PC-3 (cell line): ENCODE measurements at regions of chr20 and their contacts with region 1.

Region 1: DNA sequence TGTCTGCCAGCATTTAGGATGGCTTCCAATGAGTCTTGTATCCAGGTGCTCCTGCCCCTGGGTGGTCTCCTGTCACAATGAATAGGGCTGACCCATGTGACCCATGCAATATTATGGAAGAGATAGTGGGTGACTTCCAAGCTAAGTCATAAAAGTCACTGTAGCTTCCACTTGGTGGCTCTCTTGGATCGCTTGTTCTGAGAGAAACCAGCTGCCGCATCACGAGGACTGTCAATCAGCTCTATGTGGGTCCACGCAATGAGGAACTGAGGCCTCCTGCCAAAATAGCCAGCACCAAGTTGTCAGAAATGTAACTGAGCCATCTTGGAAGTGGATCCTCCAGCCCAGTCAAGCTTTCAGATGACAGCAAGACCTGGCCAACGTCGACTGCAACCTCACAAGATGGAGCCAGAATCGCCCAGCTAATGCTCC is 14.9 kb upstream of the MATN4 start:
- DNase-seq: peak; percentile 70
- ATAC-seq: peak; percentile 54
- H3K4me3 ChIP-seq: no peak overlapping the region
- H3K27ac ChIP-seq: no peak overlapping the region
- H3K4me1 ChIP-seq: peaks cover 9% of the 10 kb centered on the region
- H3K27me3 ChIP-seq: no peaks in the 10 kb centered on the region
- CTCF ChIP-seq: peak; percentile 63

Region 2: GRCh38 chr20:45456632-45457031 is 133.7 kb after region 1 on chr20:
- CTCF ChIA-PET with region 1: interaction called, 4 read pairs
- POLR2A ChIA-PET with region 1: no interaction called
- intact Hi-C with region 1: loop called (anchors 5 kb)
- DNase-seq: peak; percentile 63
- ATAC-seq: peak; percentile 54; the same call in 1 of the 2 replicates
- H3K4me3 ChIP-seq: no peak overlapping the region
- H3K27ac ChIP-seq: no peak overlapping the region
- H3K4me1 ChIP-seq: no peaks in the 10 kb centered on the region
- H3K27me3 ChIP-seq: no peaks in the 10 kb centered on the region
- CTCF ChIP-seq: peak; percentile 74

Region 3: DNA sequence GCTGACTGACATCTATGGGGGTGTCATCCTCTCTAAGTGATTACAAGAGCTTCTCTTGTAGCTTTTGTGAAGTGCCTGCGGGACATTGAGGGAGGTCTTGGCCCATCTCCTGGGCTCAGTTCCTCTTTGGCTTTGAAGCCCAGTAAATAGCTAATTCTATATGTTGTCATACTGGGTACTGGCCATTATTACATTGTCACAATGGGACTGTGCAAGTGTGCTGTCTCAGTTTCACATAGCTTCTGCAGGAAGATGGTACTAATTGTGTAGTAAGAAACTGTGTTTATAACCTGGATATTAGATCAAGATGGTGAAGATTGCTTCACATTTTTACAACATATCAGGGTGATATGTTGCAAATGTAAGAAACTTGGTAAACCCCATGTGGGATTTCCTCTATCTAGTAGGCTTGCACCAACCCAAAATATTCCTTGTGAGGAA is 172.6 kb after region 1 on chr20:
- CTCF ChIA-PET with region 1: interaction called, 13 read pairs
- POLR2A ChIA-PET with region 1: no interaction called
- intact Hi-C with region 1: no loop called
- DNase-seq: no peak
- ATAC-seq: no peak
- H3K4me3 ChIP-seq: no peak overlapping the region
- H3K27ac ChIP-seq: no peak overlapping the region
- H3K4me1 ChIP-seq: no peaks in the 10 kb centered on the region
- H3K27me3 ChIP-seq: peaks cover 4% of the 10 kb centered on the region; the same call in 1 of the 2 replicates
- CTCF ChIP-seq: no peak

Region 4: GRCh38 chr20:45538209-45538799 is 215.3 kb after region 1 on chr20:
- CTCF ChIA-PET with region 1: no interaction called
- POLR2A ChIA-PET with region 1: no interaction called
- intact Hi-C with region 1: no loop called
- DNase-seq: peak; percentile 93
- ATAC-seq: peak; percentile 63
- H3K4me3 ChIP-seq: no peak overlapping the region
- H3K27ac ChIP-seq: no peak overlapping the region
- H3K4me1 ChIP-seq: peaks cover 10% of the 10 kb centered on the region; the same call in 1 of the 2 replicates
- H3K27me3 ChIP-seq: peaks cover 49% of the 10 kb centered on the region
- CTCF ChIP-seq: peak; percentile 43; the same call in 1 of the 2 replicates

Region 5: DNA sequence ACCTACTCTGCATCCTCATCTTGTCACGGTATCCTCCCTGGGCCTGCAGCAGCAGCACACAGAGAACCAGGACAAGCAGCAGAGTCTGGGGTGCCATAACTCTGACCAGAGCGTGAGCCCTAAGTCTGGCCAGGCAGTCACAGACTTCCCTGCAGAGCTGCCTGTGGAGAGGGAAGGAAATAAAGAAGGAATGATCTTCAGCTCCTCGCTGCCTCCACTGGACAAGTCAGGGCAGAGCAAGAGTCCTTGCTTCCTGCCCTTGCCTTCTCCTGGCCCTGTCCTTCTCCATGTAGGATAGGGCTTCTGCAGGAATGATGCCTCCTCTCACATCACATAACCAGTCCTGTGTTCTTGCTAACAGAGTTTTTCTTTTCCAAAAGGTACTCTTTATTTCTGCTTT is 362.9 kb after region 1 on chr20:
- CTCF ChIA-PET with region 1: no interaction called
- POLR2A ChIA-PET with region 1: no interaction called
- intact Hi-C with region 1: no loop called
- DNase-seq: peak; percentile 28
- ATAC-seq: peak; percentile 65
- H3K4me3 ChIP-seq: no peak overlapping the region
- H3K27ac ChIP-seq: no peak overlapping the region
- H3K4me1 ChIP-seq: no peaks in the 10 kb centered on the region
- H3K27me3 ChIP-seq: 0 out of 2 replicates have a peak, but pooled peaks cover 4% of the 10 kb centered on the region
- CTCF ChIP-seq: peak; percentile 35